T-cell (primary cell): ENCODE measurements at regions of chr2 and their contacts with region 1.

Region 1: DNA sequence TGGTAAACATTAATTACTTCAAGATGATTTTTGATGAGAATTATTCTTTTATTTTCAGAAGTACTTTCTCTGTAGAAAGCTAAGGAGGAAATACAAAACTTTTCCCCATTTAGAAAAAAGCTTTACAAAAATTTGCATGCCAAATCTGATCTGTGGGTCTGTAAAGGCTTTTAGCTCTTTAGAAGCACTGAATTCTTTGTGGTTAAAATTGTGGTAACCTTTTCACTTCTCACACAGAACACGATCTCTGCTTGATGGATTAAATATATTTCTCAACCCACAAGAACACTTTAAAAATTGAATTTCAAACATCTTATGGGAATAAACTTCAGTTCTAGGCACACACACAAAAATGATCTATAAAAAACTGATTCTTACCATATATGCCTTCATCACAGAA is 63.7 kb downstream of the VIL1 start:
- DNase-seq: no peak
- ATAC-seq: no peak
- H3K4me3 ChIP-seq: no peak overlapping the region
- H3K4me3 Mint-ChIP-seq: no peak overlapping the region
- H3K27ac ChIP-seq: no peak overlapping the region
- H3K27ac Mint-ChIP-seq: peak overlapping the region; percentile 33 to 37
- H3K4me1 ChIP-seq: peaks cover 0 to 17% of the 10 kb centered on the region in 2 experiments
- H3K4me1 Mint-ChIP-seq: peaks cover 13 to 16% (median 16%) of the 10 kb centered on the region in 3 donors
- H3K27me3 ChIP-seq: no peaks in the 10 kb centered on the region
- H3K27me3 Mint-ChIP-seq: no peaks in the 10 kb centered on the region

Region 2: DNA sequence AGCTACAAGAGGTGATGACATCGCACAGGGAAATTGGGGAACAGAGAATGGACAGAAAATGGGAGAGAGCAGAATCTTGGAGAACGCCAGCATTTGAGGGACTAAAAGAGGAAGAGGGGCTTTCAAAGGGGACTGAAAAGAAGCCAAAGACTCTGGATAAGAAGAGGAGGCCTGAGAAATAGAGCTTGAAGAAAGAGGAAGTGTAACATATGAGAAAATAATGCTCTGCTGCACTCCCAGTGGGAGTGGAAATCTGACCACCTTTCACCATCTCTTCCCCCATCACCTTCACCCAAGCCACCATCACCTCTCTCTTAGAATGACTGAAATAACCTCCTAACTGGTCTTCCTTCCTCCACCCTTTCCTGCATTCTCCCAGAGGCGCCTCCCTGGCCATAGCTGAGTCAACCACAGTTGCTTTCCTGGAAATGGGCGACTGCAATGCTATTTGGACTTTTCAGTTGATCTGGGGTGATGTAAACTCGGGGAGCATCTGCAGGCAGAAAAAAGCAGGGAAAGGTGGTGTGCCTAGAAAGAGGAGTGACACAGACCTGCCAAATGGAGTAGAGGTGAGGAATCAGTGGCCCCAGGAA is 332.7 kb before region 1 on chr2:
- CTCF ChIA-PET with region 1: no interaction called
- POLR2A ChIA-PET with region 1: interaction called in 1 of 2 experiments, 13 read pairs
- DNase-seq: no peak
- ATAC-seq: no peak
- H3K4me3 ChIP-seq: no peak overlapping the region
- H3K4me3 Mint-ChIP-seq: no peak overlapping the region
- H3K27ac ChIP-seq: no peak overlapping the region
- H3K27ac Mint-ChIP-seq: no peak overlapping the region
- H3K4me1 ChIP-seq: no peaks in the 10 kb centered on the region
- H3K4me1 Mint-ChIP-seq: no peaks in the 10 kb centered on the region
- H3K27me3 ChIP-seq: peaks cover 0 to 3% of the 10 kb centered on the region in 2 experiments
- H3K27me3 Mint-ChIP-seq: peaks cover 5 to 6% of the 10 kb centered on the region in 2 donors